ENCODE measurements at regions of chr3 and their contacts with region 1.

Region 1: DNA sequence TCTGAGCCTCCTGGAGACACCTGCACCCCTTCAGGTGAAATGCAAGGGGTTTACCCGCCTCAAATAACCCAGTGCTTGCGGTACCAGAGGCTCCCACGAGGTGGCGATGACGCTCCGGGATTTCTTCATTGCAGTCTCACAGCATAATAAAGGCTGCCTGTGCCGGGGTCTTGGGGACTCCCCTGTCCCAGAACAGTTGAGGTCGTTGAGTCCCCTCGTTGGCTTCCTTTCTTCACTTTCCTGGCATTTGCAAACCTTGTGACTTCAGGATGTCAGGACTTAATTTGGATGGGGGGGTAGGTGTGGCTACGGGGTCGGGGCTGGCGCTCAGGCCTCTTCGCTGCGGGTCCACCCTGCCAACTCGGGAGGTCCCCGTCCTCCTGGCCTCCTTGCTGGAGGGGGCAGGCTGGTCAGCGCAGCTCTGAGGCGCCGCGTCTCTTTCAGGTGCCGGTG is 1.3 kb downstream of the GNAT1 start:
- DNase-seq: no peak
- H3K4me3 ChIP-seq: no peak overlapping the region
- H3K27me3 ChIP-seq: peaks cover 10% of the 10 kb centered on the region
- CTCF ChIP-seq: peak; percentile 92

Region 2: DNA sequence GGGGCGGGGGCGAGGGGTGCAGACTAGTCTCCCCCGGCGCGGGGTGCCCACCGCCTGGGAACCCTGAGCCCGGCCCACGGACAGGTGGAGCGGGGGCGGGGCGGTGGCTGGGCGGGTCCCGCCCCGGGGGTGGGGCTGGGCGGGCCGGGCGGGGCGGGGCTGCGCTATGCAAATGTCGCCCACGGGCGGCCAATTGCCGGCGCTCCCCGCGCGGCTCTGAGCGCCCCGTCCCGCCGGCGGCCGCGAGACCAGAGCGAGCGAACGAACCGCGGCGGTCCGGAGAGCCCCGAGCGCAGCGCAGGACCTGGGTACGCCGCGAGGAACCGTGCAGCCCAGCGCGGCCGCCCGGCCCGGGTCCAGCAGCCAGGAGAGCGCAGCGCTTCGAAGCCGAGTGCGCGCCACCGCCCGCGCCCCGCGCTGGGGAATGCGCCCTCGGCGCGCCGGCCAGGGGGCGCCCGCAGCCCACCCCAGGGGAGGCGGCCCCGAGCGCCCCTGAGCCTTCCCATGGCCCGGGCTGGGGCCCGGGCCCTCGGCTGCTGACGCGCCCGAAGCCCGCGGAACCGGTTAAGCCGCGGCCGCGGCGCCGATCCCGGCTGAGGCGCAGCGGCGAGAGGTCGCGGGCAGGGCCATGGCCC is 37.8 kb before region 1 on chr3 and contains the start of gene SEMA3F:
- CTCF ChIA-PET with region 1: interaction called, 24 read pairs
- POLR2A ChIA-PET with region 1: no interaction called
- DNase-seq: no peak
- H3K4me3 ChIP-seq: peak within 1 kb of the TSS; percentile 43
- H3K27me3 ChIP-seq: peaks cover 4% of the 10 kb centered on the region; the same call in 1 of the 2 replicates
- CTCF ChIP-seq: no peak
- polyA plus RNA-seq, gene SEMA3F: 7.4 and 11.4 TPM in 2 replicates

Region 3: DNA sequence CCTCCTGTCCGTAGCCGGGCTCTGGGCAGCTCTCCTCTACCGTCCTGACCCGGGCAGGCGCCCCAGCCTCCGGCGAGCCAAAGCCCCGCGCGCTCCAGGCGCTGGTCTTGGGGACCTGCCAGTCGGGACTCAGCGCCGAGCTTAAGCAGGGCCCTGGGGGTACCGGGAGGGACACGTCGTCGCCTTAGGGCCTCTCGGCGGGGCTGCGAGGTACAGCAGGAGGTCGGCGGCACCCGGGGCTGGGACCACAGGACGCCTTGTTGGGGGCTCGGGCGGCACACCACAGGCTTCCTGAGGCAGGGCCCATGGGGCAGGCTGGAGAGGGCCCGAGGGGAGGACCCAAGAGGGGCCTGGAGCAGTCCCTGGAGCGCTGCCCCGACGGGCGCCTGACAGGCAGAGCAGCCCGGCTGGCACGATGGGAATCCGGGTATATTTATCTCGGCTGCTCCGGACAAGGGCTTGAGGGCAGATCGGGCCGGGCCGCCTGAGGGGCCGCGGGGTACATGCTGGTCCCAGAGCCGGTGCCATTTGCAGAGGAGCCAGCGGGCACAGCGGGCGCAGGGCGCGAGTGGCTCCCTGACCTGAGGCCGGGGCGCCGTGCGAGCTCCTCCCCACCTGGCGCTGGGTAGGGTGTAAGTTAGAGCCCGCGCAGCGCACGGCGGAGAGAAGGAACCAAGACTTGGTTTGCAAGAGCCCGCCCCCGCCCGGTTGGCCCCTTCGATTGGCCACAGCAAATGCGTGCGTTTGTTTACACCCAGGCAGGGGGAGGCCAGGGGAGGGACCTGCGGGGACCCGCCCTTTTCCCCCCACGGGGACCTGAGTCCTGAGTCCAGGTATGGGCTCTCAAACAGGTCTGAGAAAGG is 12.9 kb after region 1 on chr3:
- CTCF ChIA-PET with region 1: interaction called, 81 read pairs
- POLR2A ChIA-PET with region 1: interaction called, 4 read pairs
- DNase-seq: no peak
- H3K4me3 ChIP-seq: peak overlapping the region; percentile 27
- H3K27me3 ChIP-seq: peaks cover 42% of the 10 kb centered on the region
- CTCF ChIP-seq: no peak

Region 4: DNA sequence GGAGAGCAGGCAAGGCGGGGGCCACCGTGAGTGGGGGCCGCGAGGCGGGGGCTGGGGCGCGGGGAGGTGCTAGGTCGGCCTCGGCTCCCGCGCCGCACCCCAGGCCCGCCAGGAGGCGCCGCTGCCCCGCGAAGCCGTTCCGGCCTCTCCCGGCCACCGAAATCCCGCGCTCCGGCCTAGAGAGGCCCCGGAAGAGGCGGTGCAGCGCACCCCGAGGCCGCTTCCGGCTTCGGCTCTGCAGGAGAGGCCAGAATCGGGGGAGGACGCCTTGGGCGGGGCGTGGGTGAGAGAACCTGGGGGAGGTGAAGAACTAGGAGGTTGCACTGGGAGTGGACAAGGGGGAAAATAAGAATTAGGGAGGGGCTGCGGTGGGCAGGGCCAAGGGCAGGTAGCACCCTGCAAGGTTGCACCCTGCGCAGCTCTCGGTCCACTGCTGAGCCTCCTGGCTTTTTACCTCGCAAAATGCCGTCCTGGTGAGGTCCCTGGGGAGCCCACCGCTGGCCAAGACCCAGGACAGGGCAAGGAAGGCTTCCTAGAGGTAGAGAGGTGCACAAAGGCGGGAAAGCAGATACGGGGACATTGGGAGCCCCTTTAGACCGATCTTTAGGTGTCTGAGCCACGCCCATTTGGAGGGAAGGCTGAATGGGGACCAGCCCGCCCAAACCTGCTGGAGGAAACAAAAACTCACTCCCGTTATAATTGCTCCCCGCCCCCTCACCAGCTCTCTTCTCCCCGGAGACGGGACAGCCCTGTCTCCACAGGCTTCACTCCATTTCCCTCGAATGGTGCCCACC is 34.9 kb after region 1 on chr3:
- CTCF ChIA-PET with region 1: interaction called, 378 read pairs
- POLR2A ChIA-PET with region 1: no interaction called
- DNase-seq: no peak
- H3K4me3 ChIP-seq: peak overlapping the region; percentile 83
- H3K27me3 ChIP-seq: peaks cover 7% of the 10 kb centered on the region
- CTCF ChIP-seq: peak; percentile 54

Region 5: DNA sequence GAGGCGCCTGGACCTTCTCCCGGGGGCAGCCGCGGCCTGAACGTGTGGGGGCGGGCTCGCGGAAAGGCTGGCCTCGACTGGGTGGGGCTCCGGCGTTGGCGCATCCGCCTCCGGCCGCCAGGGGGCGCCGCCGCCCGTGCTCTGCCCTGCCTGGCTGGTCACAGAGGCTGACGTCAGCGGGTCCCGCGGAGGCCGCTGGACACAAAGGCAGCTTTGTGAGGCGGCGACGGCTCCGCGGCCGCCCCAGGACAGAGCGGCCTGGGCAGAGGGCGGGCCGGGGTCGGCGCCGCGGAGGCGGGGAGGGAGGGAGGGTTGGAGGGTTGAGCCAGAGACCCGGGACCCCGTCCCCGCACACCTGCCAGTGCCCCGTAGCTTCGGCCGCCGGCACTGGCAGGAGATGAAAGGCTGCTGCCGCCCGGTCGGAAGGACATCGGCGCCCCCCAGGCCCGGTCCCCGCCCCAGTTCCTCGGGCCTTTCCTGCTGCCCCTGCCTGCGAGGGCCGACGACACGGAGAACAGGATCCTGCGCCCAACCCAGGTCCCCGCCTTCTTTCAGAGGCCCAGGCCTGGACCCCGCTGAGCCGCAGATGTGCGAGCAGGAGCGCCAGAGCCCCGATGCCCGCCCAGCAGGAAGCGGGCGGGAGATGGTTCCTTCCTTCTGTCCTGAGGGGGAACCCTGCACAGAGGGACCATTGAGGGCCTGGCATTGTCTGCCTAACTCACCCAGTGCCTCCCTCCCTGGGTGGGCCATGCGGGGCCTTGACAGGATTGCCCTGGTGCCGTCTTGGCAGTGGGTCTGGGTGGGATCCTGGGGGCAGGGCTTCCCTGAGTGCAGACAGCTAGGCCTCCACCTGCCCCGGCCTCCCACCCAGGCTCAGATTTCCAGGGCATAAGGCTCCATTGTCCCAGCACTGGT is 67.6 kb after region 1 on chr3:
- CTCF ChIA-PET with region 1: interaction called, 22 read pairs
- POLR2A ChIA-PET with region 1: no interaction called
- DNase-seq: no peak
- H3K4me3 ChIP-seq: peak overlapping the region; percentile 51
- H3K27me3 ChIP-seq: no peaks in the 10 kb centered on the region
- CTCF ChIP-seq: peak; percentile 67

Region 6: DNA sequence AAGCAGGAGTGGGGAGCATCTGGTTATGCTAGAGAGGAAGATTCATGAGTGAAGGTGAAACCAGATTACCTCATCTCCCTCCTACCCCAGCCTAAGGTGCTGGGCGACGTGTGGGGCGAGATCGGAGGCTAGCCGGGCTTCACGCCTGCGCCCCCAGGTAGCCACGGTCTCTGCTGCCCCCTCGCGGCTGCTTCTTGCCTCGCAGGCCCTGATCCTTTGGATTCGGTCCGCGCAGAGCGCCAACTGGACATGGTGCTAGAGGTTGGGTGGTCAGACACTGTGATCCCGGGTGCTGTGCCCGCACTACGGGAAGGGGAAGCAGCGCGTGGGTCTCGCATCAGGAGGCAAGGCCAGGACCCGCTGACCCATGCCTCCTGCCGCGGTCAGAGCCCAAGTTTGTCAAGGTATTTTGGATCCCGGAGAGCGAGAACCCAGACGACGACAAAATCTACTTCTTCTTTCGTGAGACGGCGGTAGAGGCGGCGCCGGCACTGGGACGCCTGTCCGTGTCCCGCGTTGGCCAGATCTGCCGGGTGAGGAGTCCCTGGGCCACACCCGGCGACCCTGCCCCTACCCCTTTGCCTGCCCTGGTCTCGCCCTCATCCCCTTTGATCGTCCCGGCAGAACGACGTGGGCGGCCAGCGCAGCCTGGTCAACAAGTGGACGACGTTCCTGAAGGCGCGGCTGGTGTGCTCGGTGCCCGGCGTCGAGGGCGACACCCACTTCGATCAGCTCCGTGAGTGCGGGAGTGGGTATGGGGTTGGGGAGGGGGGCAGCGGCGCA is 80.4 kb after region 1 on chr3:
- CTCF ChIA-PET with region 1: interaction called, 55 read pairs
- POLR2A ChIA-PET with region 1: no interaction called
- DNase-seq: no peak
- H3K4me3 ChIP-seq: no peak overlapping the region
- H3K27me3 ChIP-seq: no peaks in the 10 kb centered on the region
- CTCF ChIP-seq: peak; percentile 97

Region 7: DNA sequence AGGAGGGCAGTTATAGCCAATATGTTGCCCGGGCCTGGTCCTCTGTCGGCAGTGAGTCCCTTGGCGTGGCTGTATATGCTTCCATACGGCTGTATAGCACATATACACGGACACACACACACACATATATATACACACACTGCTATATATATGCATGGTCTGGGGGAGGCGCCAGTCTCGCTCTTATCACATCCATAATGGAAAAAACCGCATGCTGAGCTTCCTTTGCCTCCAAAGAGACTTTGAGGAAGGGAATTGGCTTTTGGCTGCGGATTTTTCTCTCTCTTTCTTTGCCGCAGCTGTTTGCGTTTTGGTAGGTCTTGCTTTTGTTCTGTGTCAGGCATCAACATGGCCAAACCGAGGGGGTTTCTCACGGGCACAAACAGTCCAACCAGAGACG is 177.9 kb after region 1 on chr3:
- CTCF ChIA-PET with region 1: no interaction called
- POLR2A ChIA-PET with region 1: no interaction called
- DNase-seq: no peak
- H3K4me3 ChIP-seq: no peak overlapping the region
- H3K27me3 ChIP-seq: no peaks in the 10 kb centered on the region; the same call in none of the 2 replicates
- CTCF ChIP-seq: no peak